ENCODE measurements at regions of chr2 and their contacts with region 1.

Region 1: GRCh38 chr2:127701193-127701650 is at the start of gene SFT2D3:
- DNase-seq: peak; percentile 89
- H3K4me3 Mint-ChIP-seq: peak within 1 kb of the TSS; percentile 92
- H3K27ac Mint-ChIP-seq: peak within 1 kb of the TSS; percentile 97
- H3K4me1 Mint-ChIP-seq: peaks cover 35% of the 10 kb centered on the region
- H3K27me3 Mint-ChIP-seq: no peaks in the 10 kb centered on the region
- total RNA-seq, gene SFT2D3: 6.6 and 7.1 TPM in 2 replicates

Region 2: DNA sequence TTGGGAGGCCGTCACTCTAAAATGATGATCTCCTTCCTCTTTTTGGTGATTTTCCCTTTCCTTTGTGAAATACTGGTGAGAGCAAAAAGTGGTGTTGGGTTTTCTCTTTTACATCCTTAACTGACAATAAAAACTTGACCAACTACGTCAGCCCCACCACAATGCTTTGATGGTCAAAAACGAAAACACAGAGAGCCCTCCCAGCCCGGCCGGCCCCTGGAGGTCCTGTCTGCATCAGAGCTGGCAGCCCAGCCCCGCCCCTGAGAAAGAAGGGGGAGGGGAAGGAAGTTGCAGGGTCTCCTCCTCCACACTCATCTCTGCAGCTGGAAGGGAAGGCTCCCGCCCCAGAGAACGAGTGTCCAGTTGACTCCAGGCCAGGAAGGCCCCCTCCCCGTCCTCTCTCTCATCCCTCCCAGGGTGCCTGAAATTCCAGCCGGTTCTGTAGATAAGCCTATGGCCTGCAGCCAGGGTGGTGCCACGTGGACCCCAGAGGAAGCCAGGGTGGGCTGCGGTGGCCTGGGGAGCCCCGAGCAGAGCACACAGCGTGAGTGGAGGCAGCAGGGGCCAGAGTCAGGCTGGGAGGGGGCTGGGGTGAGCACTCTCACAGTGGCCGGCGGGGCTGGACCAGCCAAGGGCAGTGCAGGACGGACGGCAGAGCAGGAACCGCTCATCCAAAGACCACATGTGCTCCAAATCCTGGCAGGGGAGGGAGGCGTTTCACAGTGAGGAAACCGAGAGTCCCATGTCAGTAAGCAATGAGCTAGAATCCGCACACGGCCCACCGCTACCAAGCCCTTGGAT is 614.0 kb before region 1 on chr2:
- intact Hi-C with region 1: loop called (anchors 10 kb)
- DNase-seq: no peak
- H3K4me3 Mint-ChIP-seq: no peak overlapping the region
- H3K27ac Mint-ChIP-seq: no peak overlapping the region
- H3K4me1 Mint-ChIP-seq: peaks cover 39% of the 10 kb centered on the region
- H3K27me3 Mint-ChIP-seq: peaks cover 2% of the 10 kb centered on the region

Region 3: DNA sequence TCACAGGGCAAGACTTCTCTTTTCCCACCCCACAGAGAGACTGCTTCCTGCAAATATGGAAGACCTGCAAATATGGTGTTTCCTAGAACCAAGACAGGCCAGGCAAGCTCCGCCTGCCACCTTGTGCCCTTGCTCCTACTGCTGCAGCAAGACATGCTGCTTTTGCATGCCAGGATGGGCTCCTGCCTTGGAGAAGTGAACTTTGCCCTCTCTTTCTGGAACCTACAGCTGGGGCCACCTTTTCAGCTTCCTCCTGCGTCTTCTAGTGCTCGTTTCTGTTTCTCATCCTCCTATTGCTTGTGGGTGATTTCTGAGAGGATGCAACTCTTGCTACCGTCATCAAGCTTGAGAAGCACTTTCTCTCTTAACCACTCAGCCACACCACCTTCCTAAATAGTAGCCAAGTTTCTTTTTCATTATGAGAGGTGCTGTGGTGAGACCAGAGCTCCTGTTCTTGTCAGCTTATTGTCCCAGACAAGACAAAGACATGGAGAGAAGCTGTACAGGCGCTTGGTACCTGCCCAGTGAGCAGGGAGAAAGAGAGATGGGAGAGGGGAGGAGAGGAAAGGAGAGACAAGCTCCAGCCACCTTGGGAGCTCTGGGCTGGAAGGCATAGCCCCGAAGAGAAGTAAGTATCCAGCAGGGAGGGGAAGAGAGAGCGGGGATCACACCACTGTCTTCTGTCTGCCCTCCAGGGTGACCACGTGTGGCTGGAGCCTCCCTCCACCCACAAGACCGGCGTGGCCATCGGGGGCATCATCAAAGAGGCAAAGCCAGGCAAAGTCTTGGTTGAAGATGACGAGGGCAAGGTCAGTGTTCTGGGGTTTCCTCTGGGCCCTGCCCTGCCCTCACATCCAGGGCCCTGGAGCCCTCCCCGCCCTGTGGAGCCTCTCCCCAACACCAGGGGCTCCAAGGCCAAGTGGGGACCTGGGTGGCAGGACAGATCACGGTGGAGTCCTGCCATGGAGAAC is 137.5 kb before region 1 on chr2:
- intact Hi-C with region 1: loop called (anchors 1 kb)
- DNase-seq: peak; percentile 46
- H3K4me3 Mint-ChIP-seq: peak overlapping the region; percentile 12
- H3K27ac Mint-ChIP-seq: peak overlapping the region; percentile 30
- H3K4me1 Mint-ChIP-seq: peaks cover 16% of the 10 kb centered on the region
- H3K27me3 Mint-ChIP-seq: peaks cover 32% of the 10 kb centered on the region

Region 4: GRCh38 chr2:127810619-127811396 is 109.6 kb after region 1 on chr2 and contains the start of gene WDR33:
- intact Hi-C with region 1: loop called (anchors 1 kb)
- DNase-seq: peak; percentile 94
- H3K4me3 Mint-ChIP-seq: peak within 1 kb of the TSS; percentile 95
- H3K27ac Mint-ChIP-seq: peak within 1 kb of the TSS; percentile 94
- H3K4me1 Mint-ChIP-seq: peaks cover 42% of the 10 kb centered on the region
- H3K27me3 Mint-ChIP-seq: peaks cover 6% of the 10 kb centered on the region
- total RNA-seq, gene WDR33: 81.0 and 82.4 TPM in 2 replicates

Region 5: DNA sequence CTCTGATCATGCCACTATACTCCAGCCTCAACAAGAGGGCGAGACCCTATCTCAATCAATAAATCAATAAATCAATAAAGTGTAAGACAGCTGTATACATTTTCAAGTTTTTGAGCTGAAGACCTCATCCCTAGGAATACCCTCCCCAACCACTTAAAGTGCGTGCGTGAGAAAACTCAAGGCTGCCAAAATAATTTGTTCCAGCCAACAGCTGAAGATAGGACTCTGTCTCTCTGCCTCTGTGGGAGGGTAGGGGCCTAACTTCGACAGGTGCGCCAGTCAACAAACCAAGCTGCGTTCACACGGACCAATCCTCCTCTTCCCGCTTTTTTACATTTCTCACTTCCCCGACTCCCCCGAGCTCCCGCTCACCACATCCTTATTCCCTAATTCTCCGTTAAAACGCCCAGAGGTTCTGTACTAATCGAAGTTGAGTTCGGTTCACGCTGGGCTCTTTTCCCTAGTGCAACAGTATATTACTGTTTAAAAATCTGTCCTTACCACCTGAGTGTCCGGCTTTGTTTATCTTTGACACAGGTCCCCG is 156.1 kb after region 1 on chr2:
- intact Hi-C with region 1: loop called (anchors 1 kb)
- DNase-seq: no peak
- H3K4me3 Mint-ChIP-seq: peak overlapping the region; percentile 92
- H3K27ac Mint-ChIP-seq: peak overlapping the region; percentile 78
- H3K4me1 Mint-ChIP-seq: peaks cover 32% of the 10 kb centered on the region
- H3K27me3 Mint-ChIP-seq: no peaks in the 10 kb centered on the region

Region 6: DNA sequence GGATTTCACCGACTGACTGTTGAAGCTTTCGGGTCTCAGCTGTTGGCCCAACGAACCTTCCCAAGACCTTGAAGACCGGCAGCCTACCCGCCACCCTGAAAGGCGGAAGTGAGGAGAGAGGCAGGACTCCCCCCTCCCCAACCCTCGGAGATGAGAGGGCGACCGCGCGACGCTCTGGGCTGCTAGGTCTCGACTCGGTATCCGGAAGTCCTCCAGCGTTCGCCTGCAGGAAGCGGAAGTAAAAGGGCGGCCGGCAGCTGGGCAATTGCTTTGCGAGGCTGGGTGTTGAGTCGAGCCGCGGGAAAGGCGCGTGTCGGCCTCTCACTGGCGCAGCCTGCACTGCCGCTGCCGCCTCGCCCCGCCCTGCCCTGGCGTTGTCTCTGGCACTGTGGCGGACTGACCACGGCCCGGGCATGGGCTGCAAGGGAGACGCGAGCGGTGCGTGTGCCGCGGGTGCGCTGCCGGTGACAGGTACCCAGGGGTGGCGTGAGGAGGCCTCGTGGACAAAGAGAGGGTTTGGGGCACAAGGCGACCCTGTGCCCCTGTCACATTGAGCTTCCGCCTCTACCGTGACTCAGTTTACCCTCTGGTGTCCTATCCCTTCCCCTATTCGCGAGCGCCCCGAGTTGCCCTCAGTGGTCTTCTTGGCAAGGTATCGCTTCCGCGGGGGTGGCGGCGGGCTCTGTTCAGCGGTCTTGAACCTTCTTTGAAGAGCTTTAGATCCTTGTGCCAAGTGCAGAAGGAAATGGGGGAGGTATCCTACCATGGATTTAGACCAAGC is 389.9 kb after region 1 on chr2 and contains the start of gene UGGT1:
- intact Hi-C with region 1: loop called (anchors 1 kb)
- DNase-seq: peak; percentile 93
- H3K4me3 Mint-ChIP-seq: peak within 1 kb of the TSS; percentile 87
- H3K27ac Mint-ChIP-seq: peak within 1 kb of the TSS; percentile 85
- H3K4me1 Mint-ChIP-seq: peaks cover 38% of the 10 kb centered on the region
- H3K27me3 Mint-ChIP-seq: peaks cover 7% of the 10 kb centered on the region
- total RNA-seq, gene UGGT1: 65.2 and 70.7 TPM in 2 replicates

Measured in activated T-helper 1 cell treated with anti-CD3 and anti-CD28 coated beads, Interleukin-12 subunit alpha, Interleukin-12 subunit beta, Interleukin-2, Interleukin-4 antibody, amounts not matched to agents 30 ng/mL and 10 ng/mL and 1 ng/mL, durations not matched to agents 14 hours and 24 hours and 36 hours (primary cell).